ENCODE measurements at regions of chr20 and their contacts with region 1.

Region 1: GRCh38 chr20:51639206-51639832 is 96.8 kb upstream of the NFATC2 start:
- H3K4me3 ChIP-seq: no peak overlapping the region
- H3K27ac ChIP-seq: no peak overlapping the region
- H3K4me1 ChIP-seq: no peaks in the 10 kb centered on the region
- CTCF ChIP-seq: peak; percentile 84

Region 2: GRCh38 chr20:51608061-51608460 is 31.3 kb before region 1 on chr20:
- CTCF ChIA-PET with region 1: no interaction called
- POLR2A ChIA-PET with region 1: no interaction called
- H3K4me3 ChIP-seq: no peak overlapping the region
- H3K27ac ChIP-seq: no peak overlapping the region
- H3K4me1 ChIP-seq: no peaks in the 10 kb centered on the region
- CTCF ChIP-seq: no peak

Region 3: DNA sequence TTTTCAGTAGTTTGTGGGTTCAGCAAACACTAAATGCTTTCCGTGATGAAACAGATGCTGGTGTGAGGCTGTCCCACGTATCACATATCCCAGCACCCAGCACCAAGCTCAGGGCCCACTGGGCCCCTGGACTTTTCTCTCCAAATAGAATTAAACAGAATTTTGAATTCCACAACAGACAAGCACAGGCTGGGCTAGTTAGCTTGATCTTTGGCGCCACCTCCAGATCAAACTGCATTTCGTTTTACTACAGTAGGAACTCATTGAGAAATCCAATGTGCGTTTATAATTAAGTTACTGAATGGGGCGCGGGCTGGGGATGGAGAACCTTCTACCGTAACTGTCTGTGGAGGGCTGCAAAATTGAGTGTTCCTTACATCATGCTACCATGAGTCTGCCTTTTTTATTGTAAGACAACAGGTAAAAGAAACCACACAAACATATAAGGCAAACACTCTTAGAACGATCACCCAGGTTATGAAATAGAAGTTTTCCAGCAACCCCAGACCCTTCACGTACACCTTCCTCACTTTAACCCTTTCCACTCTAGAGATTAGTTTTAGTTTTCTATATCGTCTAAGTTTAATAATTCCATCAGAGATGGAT is 444.4 kb after region 1 on chr20:
- CTCF ChIA-PET with region 1: interaction called, 13 read pairs
- POLR2A ChIA-PET with region 1: no interaction called
- H3K4me3 ChIP-seq: no peak overlapping the region
- H3K27ac ChIP-seq: no peak overlapping the region
- H3K4me1 ChIP-seq: no peaks in the 10 kb centered on the region
- CTCF ChIP-seq: peak; percentile 48